GM12878 (cell line): ENCODE measurements at regions of chr4 and their contacts with region 1.

Region 1: GRCh38 chr4:77007358-77008191 is 58.0 kb downstream of the SEPTIN11 start:
- DNase-seq: no peak
- ATAC-seq: peak; percentile 82
- H3K4me3 ChIP-seq: no peak overlapping the region
- H3K27ac ChIP-seq: peak overlapping the region; percentile 37; the same call in 1 of the 2 replicates
- H3K4me1 ChIP-seq: peaks cover 13% of the 10 kb centered on the region
- H3K27me3 ChIP-seq: no peaks in the 10 kb centered on the region
- CTCF ChIP-seq: no peak
- EP300 ChIP-seq: no peak
- POLR2A ChIP-seq: no peak
- RAD21 ChIP-seq: no peak

Region 2: DNA sequence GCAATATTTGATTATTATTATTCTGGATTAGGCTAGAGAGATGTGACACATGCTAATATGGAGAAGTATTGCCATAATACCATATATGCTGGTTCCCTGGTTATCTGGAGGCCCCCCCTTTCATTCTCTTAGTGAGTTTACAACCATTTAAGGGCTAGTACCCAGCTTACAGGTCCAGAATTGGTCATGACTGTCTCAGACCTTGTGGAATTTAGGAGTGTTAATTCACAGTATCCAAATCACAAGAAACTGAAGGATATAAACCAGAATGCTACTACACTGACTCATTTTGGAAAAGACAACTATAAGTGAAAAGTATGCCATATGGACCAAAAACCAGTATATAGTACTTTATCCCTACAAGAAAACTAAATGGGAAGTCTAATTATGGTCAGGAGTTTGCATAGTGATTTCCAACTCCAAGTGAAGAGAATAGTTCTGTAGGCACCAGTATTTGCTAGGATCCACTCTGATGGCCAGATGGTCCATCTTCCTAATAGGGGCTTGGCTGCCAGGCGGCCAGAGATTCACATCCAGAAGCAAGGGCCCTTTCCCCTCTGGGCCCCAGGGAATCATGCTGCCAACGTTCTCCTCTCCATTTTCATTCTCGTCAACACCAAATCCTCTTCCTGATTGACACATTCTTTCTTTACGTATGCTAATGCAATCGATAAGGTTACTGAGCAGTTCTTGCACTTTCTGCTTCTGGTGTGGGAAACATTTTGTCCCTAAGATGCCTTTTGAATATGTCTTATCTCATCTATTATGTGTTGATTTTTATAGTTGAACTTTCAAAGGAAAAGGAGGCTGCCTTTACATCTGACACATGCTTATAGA is 449.0 kb before region 1 on chr4:
- CTCF ChIA-PET with region 1: no interaction called
- POLR2A ChIA-PET with region 1: no interaction called
- RAD21 ChIA-PET with region 1: no interaction called
- SMC1A ChIA-PET with region 1: no interaction called
- in situ Hi-C with region 1: no loop called
- intact Hi-C with region 1: no loop called
- DNase-seq: no peak
- ATAC-seq: no peak
- H3K4me3 ChIP-seq: no peak overlapping the region
- H3K27ac ChIP-seq: no peak overlapping the region
- H3K4me1 ChIP-seq: no peaks in the 10 kb centered on the region
- H3K27me3 ChIP-seq: peaks cover 0 to 10% of the 10 kb centered on the region in 2 experiments; a peak in 2 of 4 replicates
- CTCF ChIP-seq: no peak
- EP300 ChIP-seq: no peak
- POLR2A ChIP-seq: no peak
- RAD21 ChIP-seq: no peak

Region 3: GRCh38 chr4:76879731-76880364 is 127.7 kb before region 1 on chr4:
- CTCF ChIA-PET with region 1: no interaction called
- POLR2A ChIA-PET with region 1: no interaction called
- RAD21 ChIA-PET with region 1: no interaction called
- SMC1A ChIA-PET with region 1: no interaction called
- in situ Hi-C with region 1: no loop called
- intact Hi-C with region 1: no loop called
- DNase-seq: no peak
- ATAC-seq: no peak
- H3K4me3 ChIP-seq: no peak overlapping the region
- H3K27ac ChIP-seq: no peak overlapping the region
- H3K4me1 ChIP-seq: no peaks in the 10 kb centered on the region
- H3K27me3 ChIP-seq: peaks cover 0 to 2% of the 10 kb centered on the region in 2 experiments; a peak in 2 of 4 replicates
- CTCF ChIP-seq: no peak
- EP300 ChIP-seq: no peak
- POLR2A ChIP-seq: no peak
- RAD21 ChIP-seq: no peak

Region 4: GRCh38 chr4:76993787-76994641 is 13.6 kb before region 1 on chr4:
- CTCF ChIA-PET with region 1: interaction called, 11 read pairs
- POLR2A ChIA-PET with region 1: interaction called, 8 read pairs
- RAD21 ChIA-PET with region 1: interaction called, 15 read pairs
- SMC1A ChIA-PET with region 1: interaction called, 41 read pairs
- in situ Hi-C with region 1: no loop called
- intact Hi-C with region 1: no loop called
- DNase-seq: peak; percentile 73
- ATAC-seq: peak; percentile 89
- H3K4me3 ChIP-seq: peak overlapping the region; percentile 53
- H3K27ac ChIP-seq: peak overlapping the region; percentile 89
- H3K4me1 ChIP-seq: peaks cover 38% of the 10 kb centered on the region
- H3K27me3 ChIP-seq: no peaks in the 10 kb centered on the region
- CTCF ChIP-seq: no peak
- EP300 ChIP-seq: peak in 1 of 2 experiments; percentile 69; a peak in 3 of 4 replicates
- POLR2A ChIP-seq: peak; percentile 50
- RAD21 ChIP-seq: no peak; the same call in 1 of the 2 replicates

Region 5: GRCh38 chr4:77600521-77601451 is 593.2 kb after region 1 on chr4:
- CTCF ChIA-PET with region 1: no interaction called
- POLR2A ChIA-PET with region 1: no interaction called
- RAD21 ChIA-PET with region 1: no interaction called
- SMC1A ChIA-PET with region 1: no interaction called
- in situ Hi-C with region 1: no loop called
- intact Hi-C with region 1: no loop called
- DNase-seq: no peak
- ATAC-seq: peak; percentile 88
- H3K4me3 ChIP-seq: no peak overlapping the region
- H3K27ac ChIP-seq: no peak overlapping the region
- H3K4me1 ChIP-seq: no peaks in the 10 kb centered on the region
- H3K27me3 ChIP-seq: no peaks in the 10 kb centered on the region
- CTCF ChIP-seq: peak; percentile 81 to 85 (median 82)
- EP300 ChIP-seq: no peak
- POLR2A ChIP-seq: no peak
- RAD21 ChIP-seq: peak; percentile 86